ENCODE measurements at regions of chr3 and their contacts with region 1.

Region 1: GRCh38 chr3:56693750-56694149 is 10.7 kb upstream of the TASOR start:
- DNase-seq: peak in 1 of 2 donors; percentile 34
- ATAC-seq: no peak
- H3K4me3 ChIP-seq: no peak overlapping the region
- H3K4me3 Mint-ChIP-seq: peak overlapping the region; percentile 84
- H3K27ac ChIP-seq: peak overlapping the region; percentile 63
- H3K27ac Mint-ChIP-seq: peak overlapping the region; percentile 82 to 87
- H3K4me1 ChIP-seq: peaks cover 29% of the 10 kb centered on the region
- H3K4me1 Mint-ChIP-seq: peaks cover 36 to 41% of the 10 kb centered on the region in 2 donors
- H3K27me3 ChIP-seq: no peaks in the 10 kb centered on the region
- H3K27me3 Mint-ChIP-seq: no peaks in the 10 kb centered on the region
- CTCF ChIP-seq: no peak

Region 2: GRCh38 chr3:56682462-56683121 is 11.2 kb before region 1 on chr3:
- intact Hi-C with region 1: loop called (anchors 1 kb)
- DNase-seq: peak; percentile 75 to 86
- ATAC-seq: peak; percentile 66 to 83 (median 72)
- H3K4me3 ChIP-seq: peak overlapping the region; percentile 93
- H3K4me3 Mint-ChIP-seq: peak overlapping the region; percentile 98
- H3K27ac ChIP-seq: peak overlapping the region; percentile 99
- H3K27ac Mint-ChIP-seq: peak overlapping the region; percentile 92 to 97
- H3K4me1 ChIP-seq: peaks cover 9% of the 10 kb centered on the region
- H3K4me1 Mint-ChIP-seq: peaks cover 39 to 41% of the 10 kb centered on the region in 2 donors
- H3K27me3 ChIP-seq: no peaks in the 10 kb centered on the region
- H3K27me3 Mint-ChIP-seq: no peaks in the 10 kb centered on the region
- CTCF ChIP-seq: no peak

Region 3: DNA sequence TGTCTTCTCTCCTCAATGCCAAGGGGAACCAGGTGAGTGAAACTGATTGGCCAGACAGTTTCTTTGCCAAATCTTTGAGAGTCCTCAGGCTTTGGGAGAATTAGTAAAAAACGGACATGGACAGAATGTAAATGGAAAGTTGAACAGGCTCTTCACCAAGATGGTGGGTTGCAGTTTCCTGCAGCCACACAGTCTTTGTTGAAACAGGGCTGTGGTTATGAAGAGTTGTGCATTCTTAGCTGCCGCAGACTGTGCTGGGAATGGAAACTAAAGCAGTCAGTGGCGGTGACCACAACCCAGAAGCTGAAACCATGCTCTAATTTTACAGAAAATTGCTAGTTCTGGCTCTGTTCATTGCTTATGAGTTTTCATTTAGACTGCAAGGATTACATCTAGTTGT is 31.4 kb after region 1 on chr3:
- intact Hi-C with region 1: loop called (anchors 1 kb)
- DNase-seq: peak; percentile 56 to 77
- ATAC-seq: peak; percentile 69 to 94 (median 76)
- H3K4me3 ChIP-seq: no peak overlapping the region
- H3K4me3 Mint-ChIP-seq: peak overlapping the region; percentile 81
- H3K27ac ChIP-seq: peak overlapping the region; percentile 75
- H3K27ac Mint-ChIP-seq: peak overlapping the region; percentile 88 to 89
- H3K4me1 ChIP-seq: peaks cover 31% of the 10 kb centered on the region
- H3K4me1 Mint-ChIP-seq: peaks cover 49 to 70% of the 10 kb centered on the region in 2 donors
- H3K27me3 ChIP-seq: no peaks in the 10 kb centered on the region
- H3K27me3 Mint-ChIP-seq: no peaks in the 10 kb centered on the region
- CTCF ChIP-seq: no peak

Region 4: GRCh38 chr3:56753206-56753820 is 59.6 kb after region 1 on chr3:
- intact Hi-C with region 1: loop called (anchors 2 kb)
- DNase-seq: peak; percentile 41
- ATAC-seq: peak; percentile 78 to 94 (median 87)
- H3K4me3 ChIP-seq: no peak overlapping the region
- H3K4me3 Mint-ChIP-seq: peak overlapping the region; percentile 99
- H3K27ac ChIP-seq: peak overlapping the region; percentile 89
- H3K27ac Mint-ChIP-seq: peak overlapping the region; percentile 99 to 100
- H3K4me1 ChIP-seq: peaks cover 67% of the 10 kb centered on the region
- H3K4me1 Mint-ChIP-seq: peaks cover 69 to 80% of the 10 kb centered on the region in 2 donors
- H3K27me3 ChIP-seq: no peaks in the 10 kb centered on the region
- H3K27me3 Mint-ChIP-seq: no peaks in the 10 kb centered on the region
- CTCF ChIP-seq: no peak

Region 5: GRCh38 chr3:57227204-57227929 is 533.6 kb after region 1 on chr3 and contains the start of gene APPL1:
- intact Hi-C with region 1: loop called (anchors 5 kb)
- DNase-seq: peak; percentile 86 to 93
- ATAC-seq: peak; percentile 86 to 94 (median 93)
- H3K4me3 ChIP-seq: peak within 1 kb of the TSS; percentile 71
- H3K4me3 Mint-ChIP-seq: peak within 1 kb of the TSS; percentile 92
- H3K27ac ChIP-seq: peak within 1 kb of the TSS; percentile 49
- H3K27ac Mint-ChIP-seq: peak within 1 kb of the TSS; percentile 75 to 85
- H3K4me1 ChIP-seq: peaks cover 12% of the 10 kb centered on the region
- H3K4me1 Mint-ChIP-seq: peaks cover 21 to 25% of the 10 kb centered on the region in 2 donors
- H3K27me3 ChIP-seq: no peaks in the 10 kb centered on the region
- H3K27me3 Mint-ChIP-seq: no peaks in the 10 kb centered on the region
- CTCF ChIP-seq: no peak
- total RNA-seq, gene APPL1: 29.6 to 40.8 (median 38.2) TPM